ENCODE measurements at regions of chr3 and their contacts with region 1.

Region 1: GRCh38 chr3:194573691-194574437 is 59.4 kb downstream of the TMEM44 start:
- DNase-seq: no peak
- H3K4me3 ChIP-seq: no peak overlapping the region
- H3K27ac ChIP-seq: no peak overlapping the region
- H3K4me1 ChIP-seq: peaks cover 29% of the 10 kb centered on the region
- H3K27me3 ChIP-seq: no peaks in the 10 kb centered on the region
- CTCF ChIP-seq: peak; percentile 44 to 54

Region 2: GRCh38 chr3:193357291-193357690 is 1216.6 kb before region 1 on chr3:
- CTCF ChIA-PET with region 1: no interaction called
- dilution Hi-C with region 1: no loop called
- in situ Hi-C with region 1: no loop called
- intact Hi-C with region 1: no loop called
- DNase-seq: no peak
- H3K4me3 ChIP-seq: no peak overlapping the region
- H3K27ac ChIP-seq: no peak overlapping the region
- H3K4me1 ChIP-seq: no peaks in the 10 kb centered on the region
- H3K27me3 ChIP-seq: peaks cover 3% of the 10 kb centered on the region
- CTCF ChIP-seq: no peak

Region 3: DNA sequence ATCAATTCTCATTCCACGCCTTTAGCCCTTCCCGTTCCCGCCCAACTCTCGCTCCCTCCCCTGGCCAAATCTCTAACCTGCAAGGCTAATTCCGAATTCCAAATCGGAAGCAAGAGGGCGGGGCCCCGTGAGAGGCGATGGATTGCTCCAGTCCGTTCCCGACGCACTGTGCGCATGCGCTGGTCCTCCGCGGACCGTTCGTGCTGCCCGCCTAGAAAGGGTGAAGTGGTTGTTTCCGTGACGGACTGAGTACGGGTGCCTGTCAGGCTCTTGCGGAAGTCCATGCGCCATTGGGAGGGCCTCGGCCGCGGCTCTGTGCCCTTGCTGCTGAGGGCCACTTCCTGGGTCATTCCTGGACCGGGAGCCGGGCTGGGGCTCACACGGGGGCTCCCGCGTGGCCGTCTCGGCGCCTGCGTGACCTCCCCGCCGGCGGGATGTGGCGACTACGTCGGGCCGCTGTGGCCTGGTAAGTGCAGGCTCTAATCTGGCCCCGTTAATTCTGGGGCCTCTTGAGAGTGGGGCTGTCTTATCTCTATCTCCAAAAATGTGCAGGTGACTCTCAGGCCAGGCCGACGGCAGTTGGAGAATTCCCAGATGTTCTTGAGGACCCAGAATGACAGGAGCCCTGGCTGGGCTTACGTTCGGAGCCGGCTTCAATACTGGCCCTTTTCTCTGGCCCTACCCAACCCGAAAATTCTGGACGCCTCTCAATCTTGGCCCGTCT is 980.8 kb before region 1 on chr3 and contains the start of gene OPA1:
- CTCF ChIA-PET with region 1: no interaction called
- dilution Hi-C with region 1: no loop called
- in situ Hi-C with region 1: no loop called
- intact Hi-C with region 1: loop called (anchors 5 kb)
- DNase-seq: peak; percentile 98
- H3K4me3 ChIP-seq: peak within 1 kb of the TSS; percentile 70 to 82 (median 73)
- H3K27ac ChIP-seq: peak within 1 kb of the TSS; percentile 84
- H3K4me1 ChIP-seq: peaks cover 26% of the 10 kb centered on the region
- H3K27me3 ChIP-seq: no peaks in the 10 kb centered on the region
- CTCF ChIP-seq: peak in 1 of 2 donors; percentile 43
- total RNA-seq, gene OPA1: 60.4 to 66.3 TPM

Region 4: GRCh38 chr3:194527726-194528125 is 46.1 kb before region 1 on chr3:
- CTCF ChIA-PET with region 1: no interaction called
- dilution Hi-C with region 1: no loop called
- in situ Hi-C with region 1: no loop called
- intact Hi-C with region 1: loop called (anchors 5 kb)
- DNase-seq: no peak
- H3K4me3 ChIP-seq: no peak overlapping the region
- H3K27ac ChIP-seq: no peak overlapping the region
- H3K4me1 ChIP-seq: peaks cover 8% of the 10 kb centered on the region
- H3K27me3 ChIP-seq: no peaks in the 10 kb centered on the region
- CTCF ChIP-seq: no peak